ENCODE measurements at regions of chr14 and their contacts with region 1.

Region 1: DNA sequence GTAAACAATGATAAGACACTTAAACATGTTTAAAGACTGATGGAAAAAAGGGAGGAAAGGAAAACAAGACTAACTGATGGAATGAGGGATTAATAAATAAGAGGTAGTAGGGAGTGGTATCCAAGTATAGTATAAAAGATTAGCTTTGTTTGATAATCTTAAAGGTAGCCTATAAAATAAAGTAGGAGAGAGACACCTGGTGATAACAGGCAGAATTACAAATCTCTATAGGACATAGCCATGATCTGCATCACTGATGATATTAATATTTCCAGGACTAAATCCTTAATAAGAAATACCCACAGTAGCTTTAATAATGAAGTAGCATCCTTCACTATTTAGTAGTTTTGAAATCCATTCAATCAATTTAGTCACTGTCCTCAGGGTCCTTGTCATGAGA is 30.4 kb downstream of the DLGAP5 start:
- DNase-seq: peak in 4 of 5 donors; percentile 42 to 49 (median 46)
- H3K4me3 ChIP-seq: no peak overlapping the region
- H3K4me3 Mint-ChIP-seq: no peak overlapping the region
- H3K27ac ChIP-seq: no peak overlapping the region
- H3K27ac Mint-ChIP-seq: peak overlapping the region in 3 of 7 donors; percentile 14 to 80 (median 48)
- H3K4me1 ChIP-seq: peaks cover 21% of the 10 kb centered on the region
- H3K4me1 Mint-ChIP-seq: peaks cover 16 to 31% (median 18%) of the 10 kb centered on the region in 4 donors
- H3K27me3 ChIP-seq: no peaks in the 10 kb centered on the region
- H3K27me3 Mint-ChIP-seq: no peaks in the 10 kb centered on the region

Region 2: GRCh38 chr14:55071870-55072640 is 88.9 kb before region 1 on chr14:
- CTCF ChIA-PET with region 1: interaction called, 16 read pairs
- POLR2A ChIA-PET with region 1: interaction called, 3 read pairs
- intact Hi-C with region 1: no loop called
- DNase-seq: peak; percentile 24 to 52 (median 36)
- H3K4me3 ChIP-seq: peak overlapping the region in 1 of 2 donors; percentile 6
- H3K4me3 Mint-ChIP-seq: peak overlapping the region; percentile 24 to 85 (median 57)
- H3K27ac ChIP-seq: peak overlapping the region; percentile 29
- H3K27ac Mint-ChIP-seq: peak overlapping the region; percentile 72 to 93 (median 90)
- H3K4me1 ChIP-seq: peaks cover 37% of the 10 kb centered on the region
- H3K4me1 Mint-ChIP-seq: peaks cover 24 to 44% (median 38%) of the 10 kb centered on the region in 4 donors
- H3K27me3 ChIP-seq: no peaks in the 10 kb centered on the region
- H3K27me3 Mint-ChIP-seq: no peaks in the 10 kb centered on the region

Region 3: GRCh38 chr14:55085060-55085660 is 75.8 kb before region 1 on chr14:
- CTCF ChIA-PET with region 1: interaction called, 286 read pairs
- POLR2A ChIA-PET with region 1: interaction called, 11 read pairs
- intact Hi-C with region 1: loop called (anchors 1 kb)
- DNase-seq: no peak
- H3K4me3 ChIP-seq: no peak overlapping the region
- H3K4me3 Mint-ChIP-seq: no peak overlapping the region
- H3K27ac ChIP-seq: no peak overlapping the region
- H3K27ac Mint-ChIP-seq: no peak overlapping the region
- H3K4me1 ChIP-seq: peaks cover 3% of the 10 kb centered on the region
- H3K4me1 Mint-ChIP-seq: peaks cover 3% of the 10 kb centered on the region in 4 donors
- H3K27me3 ChIP-seq: no peaks in the 10 kb centered on the region
- H3K27me3 Mint-ChIP-seq: no peaks in the 10 kb centered on the region

Region 4: DNA sequence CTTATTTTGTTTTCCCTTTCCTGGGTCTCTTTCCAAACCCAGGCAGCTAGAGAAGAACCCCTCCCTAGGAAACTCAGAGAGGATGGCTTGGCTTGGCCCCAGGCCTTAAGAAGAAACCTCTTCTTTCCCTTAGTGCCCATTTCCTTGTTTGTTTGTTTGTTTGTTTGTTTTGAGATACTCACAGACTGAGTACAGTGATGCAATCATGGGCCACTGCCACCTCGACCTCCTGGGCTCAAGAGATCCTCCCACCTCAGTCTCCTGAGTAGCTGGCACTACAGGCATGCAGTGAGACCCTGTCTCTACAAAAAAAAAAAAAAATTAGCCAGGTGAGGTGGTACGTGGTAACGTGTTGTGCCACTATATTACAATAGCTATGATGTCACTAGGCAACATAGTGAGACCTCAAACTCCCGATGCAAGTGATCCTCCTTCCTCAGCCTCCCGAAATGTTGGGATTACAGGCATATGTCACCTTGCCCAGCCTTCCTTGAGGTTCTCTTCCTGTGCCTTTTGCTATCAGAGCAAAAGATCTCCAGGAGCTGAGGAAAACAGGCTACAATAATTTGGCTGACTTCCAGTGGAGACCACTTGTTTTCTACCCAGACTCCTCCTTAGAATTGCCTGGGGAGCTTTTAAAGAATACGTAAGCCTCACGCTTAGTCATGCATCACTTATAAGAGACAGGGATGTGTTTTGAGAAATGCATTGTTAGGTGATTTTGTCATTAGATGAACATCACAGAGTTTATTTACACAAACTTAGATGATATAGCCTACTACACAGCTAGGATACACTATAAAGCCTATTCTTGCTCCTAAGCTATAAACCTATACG is 66.5 kb before region 1 on chr14:
- CTCF ChIA-PET with region 1: interaction called, 286 read pairs
- POLR2A ChIA-PET with region 1: interaction called, 11 read pairs
- intact Hi-C with region 1: loop called (anchors 1 kb)
- DNase-seq: no peak
- H3K4me3 ChIP-seq: no peak overlapping the region
- H3K4me3 Mint-ChIP-seq: no peak overlapping the region
- H3K27ac ChIP-seq: no peak overlapping the region
- H3K27ac Mint-ChIP-seq: no peak overlapping the region
- H3K4me1 ChIP-seq: peaks cover 21% of the 10 kb centered on the region
- H3K4me1 Mint-ChIP-seq: peaks cover 19 to 23% (median 20%) of the 10 kb centered on the region in 4 donors
- H3K27me3 ChIP-seq: no peaks in the 10 kb centered on the region
- H3K27me3 Mint-ChIP-seq: no peaks in the 10 kb centered on the region

Region 5: GRCh38 chr14:55102141-55102621 is 58.8 kb before region 1 on chr14:
- CTCF ChIA-PET with region 1: interaction called, 33 read pairs
- POLR2A ChIA-PET with region 1: interaction called, 29 read pairs
- intact Hi-C with region 1: no loop called
- DNase-seq: peak; percentile 53 to 77 (median 55)
- H3K4me3 ChIP-seq: peak overlapping the region in 1 of 2 donors; percentile 26
- H3K4me3 Mint-ChIP-seq: peak overlapping the region in 7 of 8 donors; percentile 18 to 85 (median 67)
- H3K27ac ChIP-seq: peak overlapping the region; percentile 65
- H3K27ac Mint-ChIP-seq: peak overlapping the region; percentile 94 to 98 (median 97)
- H3K4me1 ChIP-seq: peaks cover 72% of the 10 kb centered on the region
- H3K4me1 Mint-ChIP-seq: peaks cover 41 to 72% (median 53%) of the 10 kb centered on the region in 4 donors
- H3K27me3 ChIP-seq: no peaks in the 10 kb centered on the region
- H3K27me3 Mint-ChIP-seq: no peaks in the 10 kb centered on the region

Region 6: DNA sequence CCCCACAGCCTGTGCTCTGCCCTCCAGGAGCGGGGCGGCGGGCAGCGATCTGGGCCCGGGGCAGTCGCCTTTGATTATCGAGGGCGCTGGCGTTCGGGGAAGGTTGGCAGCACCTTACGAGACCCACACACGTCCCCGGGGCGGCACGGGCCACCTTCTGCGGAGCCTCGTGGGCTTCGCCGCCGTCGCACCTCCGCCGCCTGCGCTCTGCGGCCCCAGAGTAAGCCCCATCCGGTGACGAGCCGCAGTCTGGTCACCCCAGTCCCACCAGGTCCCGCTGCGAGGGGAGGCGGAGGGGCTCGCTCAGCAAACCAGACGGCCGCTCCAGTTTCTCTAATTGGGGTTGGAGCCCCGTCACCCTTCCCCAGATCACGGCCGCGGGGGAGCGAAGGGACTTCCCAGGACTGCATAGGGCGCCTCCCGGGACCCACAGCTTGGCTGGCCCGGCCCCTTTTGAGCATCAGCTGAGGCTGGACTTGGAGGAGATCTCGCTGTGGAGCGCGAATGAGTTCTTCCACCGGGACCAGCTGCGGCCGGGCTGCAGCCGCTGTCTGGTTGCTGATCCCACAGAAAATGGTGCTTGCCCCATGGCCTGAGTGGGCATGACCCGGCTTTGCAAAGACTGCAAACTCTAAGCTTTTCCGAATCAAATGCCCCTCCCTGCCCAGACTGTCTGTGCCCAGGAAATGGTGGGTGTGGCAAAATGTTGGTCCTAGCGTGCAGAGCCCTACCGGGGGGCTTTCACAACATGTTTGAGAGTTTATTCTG is 31.4 kb before region 1 on chr14:
- CTCF ChIA-PET with region 1: interaction called, 10 read pairs
- POLR2A ChIA-PET with region 1: interaction called, 4 read pairs
- intact Hi-C with region 1: no loop called
- DNase-seq: peak; percentile 40 to 77 (median 47)
- H3K4me3 ChIP-seq: peak overlapping the region; percentile 1 to 43
- H3K4me3 Mint-ChIP-seq: peak overlapping the region; percentile 78 to 85 (median 82)
- H3K27ac ChIP-seq: peak overlapping the region; percentile 53
- H3K27ac Mint-ChIP-seq: peak overlapping the region; percentile 37 to 86 (median 61)
- H3K4me1 ChIP-seq: peaks cover 38% of the 10 kb centered on the region
- H3K4me1 Mint-ChIP-seq: peaks cover 22 to 48% (median 30%) of the 10 kb centered on the region in 4 donors
- H3K27me3 ChIP-seq: no peaks in the 10 kb centered on the region
- H3K27me3 Mint-ChIP-seq: peaks cover 0 to 1% of the 10 kb centered on the region in 2 donors

Measured in CD4-positive, alpha-beta memory T cell (primary cell).